Activated CD8-positive, alpha-beta T cell treated with anti-CD3 and anti-CD28 coated beads, Interleukin-2, amount 10 ng/mL, durations not matched to agents 7 days and 5 days (primary cell): ENCODE measurements at regions of chr12 and their contacts with region 1.

Region 1: DNA sequence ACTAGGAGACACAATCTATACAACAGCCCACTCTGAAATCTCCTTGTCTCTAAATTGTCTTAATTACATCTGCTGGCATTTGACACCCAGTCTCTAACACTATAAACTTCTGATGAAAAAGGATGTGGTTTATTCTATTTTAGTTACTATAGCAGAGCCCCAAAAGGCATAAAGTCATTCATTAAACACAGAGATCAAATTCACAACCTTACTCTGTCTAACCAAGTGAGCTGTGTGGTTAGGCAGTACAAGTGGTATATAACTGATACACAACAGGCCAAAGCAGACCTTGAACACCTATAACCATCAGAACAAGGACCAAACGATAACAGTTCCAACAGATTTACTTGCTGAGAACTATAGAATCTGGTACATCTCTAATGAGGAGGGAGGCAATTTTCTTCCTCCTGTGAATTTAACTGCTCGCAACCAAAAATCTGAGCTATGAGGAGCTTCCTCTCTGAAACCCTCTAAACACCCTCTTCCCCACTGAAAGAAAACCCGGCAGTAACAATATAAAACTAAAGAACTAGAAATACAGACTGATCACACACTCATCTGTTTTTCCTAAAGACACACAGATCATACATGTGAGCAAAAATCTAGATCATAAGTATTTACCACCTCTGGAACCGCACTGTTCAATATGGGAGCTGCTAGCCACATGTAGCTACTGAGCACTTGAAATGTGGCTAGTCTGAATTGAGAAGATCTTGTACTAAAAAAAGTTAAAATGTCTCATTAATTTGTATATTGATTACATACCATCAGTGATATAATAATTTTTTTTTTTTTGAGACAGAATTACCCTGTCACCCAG is 17.7 kb downstream of the SPPL3 start:
- DNase-seq: no peak
- ATAC-seq: peak; percentile 87
- H3K4me3 Mint-ChIP-seq: peak overlapping the region; percentile 49
- H3K27ac Mint-ChIP-seq: peak overlapping the region; percentile 85
- H3K4me1 Mint-ChIP-seq: peaks cover 46% of the 10 kb centered on the region
- H3K27me3 Mint-ChIP-seq: no peaks in the 10 kb centered on the region

Region 2: GRCh38 chr12:120856980-120857379 is 29.4 kb before region 1 on chr12:
- CTCF ChIA-PET with region 1: interaction called, 11 read pairs
- POLR2A ChIA-PET with region 1: no interaction called
- DNase-seq: no peak
- ATAC-seq: peak; percentile 61
- H3K4me3 Mint-ChIP-seq: no peak overlapping the region
- H3K27ac Mint-ChIP-seq: no peak overlapping the region
- H3K4me1 Mint-ChIP-seq: peaks cover 35% of the 10 kb centered on the region
- H3K27me3 Mint-ChIP-seq: no peaks in the 10 kb centered on the region

Region 3: GRCh38 chr12:120904197-120904773 is 17.9 kb after region 1 on chr12 and contains the start of gene SPPL3:
- CTCF ChIA-PET with region 1: interaction called, 9 read pairs
- POLR2A ChIA-PET with region 1: interaction called, 50 read pairs
- DNase-seq: peak; percentile 94
- ATAC-seq: peak; percentile 81
- H3K4me3 Mint-ChIP-seq: peak within 1 kb of the TSS; percentile 99
- H3K27ac Mint-ChIP-seq: peak within 1 kb of the TSS; percentile 96
- H3K4me1 Mint-ChIP-seq: peaks cover 27% of the 10 kb centered on the region
- H3K27me3 Mint-ChIP-seq: peaks cover 2% of the 10 kb centered on the region
- total RNA-seq, gene SPPL3: 23.3 to 27.8 TPM